ENCODE measurements at regions of chr11 and their contacts with region 1.

Region 1: GRCh38 chr11:5291207-5291838 is 10.4 kb downstream of the OR51B4 start:
- DNase-seq: peak; percentile 68
- ATAC-seq: peak; percentile 36; the same call in 1 of the 2 replicates
- H3K4me3 ChIP-seq: no peak overlapping the region
- H3K27ac ChIP-seq: no peak overlapping the region
- H3K4me1 ChIP-seq: peaks cover 10% of the 10 kb centered on the region; the same call in 1 of the 2 replicates
- H3K27me3 ChIP-seq: no peaks in the 10 kb centered on the region
- CTCF ChIP-seq: peak; percentile 63
- POLR2A ChIP-seq: no peak
- RAD21 ChIP-seq: peak; percentile 74

Region 2: DNA sequence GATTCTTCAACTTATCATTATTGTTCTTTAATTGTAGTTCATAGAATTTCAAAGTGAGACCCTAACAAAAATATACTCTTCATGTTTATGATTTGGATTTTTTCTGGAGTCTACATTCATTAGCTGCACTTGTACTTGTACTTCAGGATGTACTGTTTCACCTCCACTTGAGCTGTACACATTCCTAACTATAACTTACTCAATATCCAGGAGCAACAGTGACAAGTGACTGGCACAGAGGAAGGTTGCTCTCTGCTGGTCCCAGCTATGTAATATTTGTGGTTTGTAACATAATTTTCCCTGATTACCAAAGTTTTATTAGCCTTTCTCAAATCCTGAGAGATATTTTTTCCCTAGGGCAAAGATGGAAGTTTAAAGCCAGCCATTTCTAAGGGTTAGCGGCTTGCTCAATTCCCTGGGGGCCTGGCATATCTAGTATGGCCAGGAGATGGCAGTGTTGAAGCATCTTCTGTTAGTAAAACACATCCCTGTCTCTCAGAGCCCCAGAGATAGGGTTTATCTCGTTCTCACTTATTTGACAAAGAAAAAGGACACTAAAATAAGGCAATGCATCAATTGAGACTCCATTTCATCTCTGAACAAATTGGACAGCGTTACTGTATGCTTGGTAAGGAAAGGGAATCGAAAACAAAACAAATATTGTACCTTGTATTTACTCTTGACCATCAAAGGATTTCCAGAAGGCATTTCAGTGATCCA is 167.4 kb before region 1 on chr11:
- CTCF ChIA-PET with region 1: no interaction called
- POLR2A ChIA-PET with region 1: no interaction called
- dilution Hi-C with region 1: no loop called
- in situ Hi-C with region 1: no loop called
- intact Hi-C with region 1: loop called (anchors 2 kb)
- DNase-seq: peak; percentile 76
- ATAC-seq: peak; percentile 100
- H3K4me3 ChIP-seq: no peak overlapping the region
- H3K27ac ChIP-seq: no peak overlapping the region
- H3K4me1 ChIP-seq: no peaks in the 10 kb centered on the region
- H3K27me3 ChIP-seq: no peaks in the 10 kb centered on the region
- CTCF ChIP-seq: peak; percentile 94
- POLR2A ChIP-seq: no peak
- RAD21 ChIP-seq: peak; percentile 91

Region 3: DNA sequence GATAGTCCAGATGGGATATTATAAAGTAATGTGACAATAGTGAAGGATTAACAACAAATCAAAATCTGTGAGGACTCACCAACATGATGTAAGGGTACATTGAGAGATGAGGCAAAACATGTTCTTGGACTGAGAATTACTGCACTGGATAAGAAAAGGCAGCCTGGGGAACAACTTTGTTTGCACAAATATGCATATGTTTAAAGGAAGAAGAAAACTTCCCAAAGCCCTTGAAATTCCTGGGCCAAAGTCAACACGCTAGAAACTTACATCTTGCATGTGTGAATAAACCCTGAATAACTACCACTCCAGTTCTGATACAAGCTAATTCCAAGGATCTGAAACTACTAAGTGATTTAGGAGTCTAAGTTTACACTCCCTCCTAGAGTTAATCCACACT is 154.3 kb before region 1 on chr11:
- CTCF ChIA-PET with region 1: no interaction called
- POLR2A ChIA-PET with region 1: no interaction called
- dilution Hi-C with region 1: no loop called
- in situ Hi-C with region 1: no loop called
- intact Hi-C with region 1: no loop called
- DNase-seq: no peak
- ATAC-seq: no peak
- H3K4me3 ChIP-seq: no peak overlapping the region
- H3K27ac ChIP-seq: no peak overlapping the region
- H3K4me1 ChIP-seq: no peaks in the 10 kb centered on the region
- H3K27me3 ChIP-seq: no peaks in the 10 kb centered on the region
- CTCF ChIP-seq: no peak
- POLR2A ChIP-seq: no peak
- RAD21 ChIP-seq: no peak

Region 4: DNA sequence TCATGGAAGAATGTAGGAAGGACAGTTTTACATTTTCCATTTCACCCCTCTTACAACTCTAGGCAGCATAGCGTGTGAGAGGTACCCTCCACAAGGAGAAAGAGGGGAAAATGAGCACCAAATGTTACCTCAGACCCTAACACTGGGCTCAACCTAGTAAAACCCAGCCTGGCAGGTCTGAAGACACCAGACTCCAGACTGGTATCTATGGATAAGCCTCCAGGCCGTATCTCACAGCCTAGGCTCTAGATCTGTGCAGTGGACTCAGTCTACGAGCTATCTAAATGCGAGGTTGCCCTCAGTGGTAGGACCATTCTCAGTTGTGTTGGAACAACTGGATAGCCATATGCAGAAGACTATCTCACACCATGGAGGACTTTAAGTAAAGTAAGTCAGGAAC is 383.1 kb after region 1 on chr11:
- CTCF ChIA-PET with region 1: no interaction called
- POLR2A ChIA-PET with region 1: no interaction called
- dilution Hi-C with region 1: no loop called
- in situ Hi-C with region 1: no loop called
- intact Hi-C with region 1: no loop called
- DNase-seq: no peak
- ATAC-seq: no peak
- H3K4me3 ChIP-seq: no peak overlapping the region
- H3K27ac ChIP-seq: no peak overlapping the region
- H3K4me1 ChIP-seq: no peaks in the 10 kb centered on the region
- H3K27me3 ChIP-seq: no peaks in the 10 kb centered on the region
- CTCF ChIP-seq: no peak
- POLR2A ChIP-seq: no peak
- RAD21 ChIP-seq: no peak

Measured in IMR-90 (cell line).